ENCODE measurements at regions of chr22 and their contacts with region 1.

Region 1: GRCh38 chr22:20783844-20784723 is 10.2 kb downstream of the SERPIND1 start:
- DNase-seq: peak; percentile 30 to 62
- ATAC-seq: peak; percentile 85 to 88; a peak in 5 of 6 replicates
- H3K4me3 ChIP-seq: no peak overlapping the region
- H3K27ac ChIP-seq: no peak overlapping the region
- H3K4me1 ChIP-seq: no peaks in the 10 kb centered on the region
- CTCF ChIP-seq: peak; percentile 56
- EP300 ChIP-seq: no peak
- POLR2A ChIP-seq: no peak
- RAD21 ChIP-seq: peak; percentile 47 to 51; a peak in 4 of 5 replicates

Region 2: GRCh38 chr22:20763630-20764470 is 20.2 kb before region 1 on chr22:
- CTCF ChIA-PET with region 1: interaction called, 12 read pairs
- POLR2A ChIA-PET with region 1: no interaction called
- DNase-seq: no peak
- ATAC-seq: no peak
- H3K4me3 ChIP-seq: no peak overlapping the region
- H3K27ac ChIP-seq: no peak overlapping the region
- H3K4me1 ChIP-seq: no peaks in the 10 kb centered on the region
- CTCF ChIP-seq: no peak
- EP300 ChIP-seq: no peak
- POLR2A ChIP-seq: no peak
- RAD21 ChIP-seq: no peak

Region 3: DNA sequence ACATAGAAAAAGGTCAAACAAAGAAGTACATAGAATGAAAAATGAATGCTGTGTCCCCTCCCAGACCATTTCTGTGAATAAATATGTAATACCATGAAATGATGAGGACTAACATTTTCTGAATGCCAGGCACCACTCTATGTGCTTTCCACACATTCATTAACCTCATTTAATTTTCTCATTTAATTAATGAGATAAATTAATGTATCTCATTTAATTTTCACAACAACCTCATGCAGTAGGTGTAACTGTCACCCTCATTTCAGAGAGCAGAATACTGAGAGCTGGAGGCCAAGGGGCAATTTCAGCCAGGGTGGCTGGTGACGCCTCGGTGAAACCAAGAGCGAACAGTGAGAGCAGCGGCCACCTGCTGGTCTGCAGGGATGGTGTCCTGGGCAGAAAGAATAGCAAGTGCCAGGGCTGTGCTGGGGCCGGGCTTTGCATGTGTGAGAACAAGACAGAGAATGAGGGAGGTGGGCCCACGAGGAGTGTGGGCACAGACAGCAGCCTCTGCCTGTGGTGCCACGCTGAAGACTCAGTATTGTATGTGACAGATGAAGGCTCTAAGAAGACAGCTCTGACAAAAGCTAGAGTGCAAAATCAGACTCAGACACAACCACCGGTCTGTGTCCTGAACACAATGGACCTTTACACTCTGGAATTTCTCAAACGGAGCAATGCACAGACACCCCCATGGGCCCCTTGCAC is 12.0 kb before region 1 on chr22:
- CTCF ChIA-PET with region 1: interaction called, 19 read pairs
- POLR2A ChIA-PET with region 1: no interaction called
- DNase-seq: peak in 1 of 2 experiments; percentile 21
- ATAC-seq: peak; percentile 79 to 81; a peak in 4 of 6 replicates
- H3K4me3 ChIP-seq: no peak overlapping the region
- H3K27ac ChIP-seq: no peak overlapping the region
- H3K4me1 ChIP-seq: peaks cover 6% of the 10 kb centered on the region
- CTCF ChIP-seq: no peak
- EP300 ChIP-seq: no peak
- POLR2A ChIP-seq: no peak
- RAD21 ChIP-seq: no peak